ENCODE measurements at regions of chr9 and their contacts with region 1.

Region 1: DNA sequence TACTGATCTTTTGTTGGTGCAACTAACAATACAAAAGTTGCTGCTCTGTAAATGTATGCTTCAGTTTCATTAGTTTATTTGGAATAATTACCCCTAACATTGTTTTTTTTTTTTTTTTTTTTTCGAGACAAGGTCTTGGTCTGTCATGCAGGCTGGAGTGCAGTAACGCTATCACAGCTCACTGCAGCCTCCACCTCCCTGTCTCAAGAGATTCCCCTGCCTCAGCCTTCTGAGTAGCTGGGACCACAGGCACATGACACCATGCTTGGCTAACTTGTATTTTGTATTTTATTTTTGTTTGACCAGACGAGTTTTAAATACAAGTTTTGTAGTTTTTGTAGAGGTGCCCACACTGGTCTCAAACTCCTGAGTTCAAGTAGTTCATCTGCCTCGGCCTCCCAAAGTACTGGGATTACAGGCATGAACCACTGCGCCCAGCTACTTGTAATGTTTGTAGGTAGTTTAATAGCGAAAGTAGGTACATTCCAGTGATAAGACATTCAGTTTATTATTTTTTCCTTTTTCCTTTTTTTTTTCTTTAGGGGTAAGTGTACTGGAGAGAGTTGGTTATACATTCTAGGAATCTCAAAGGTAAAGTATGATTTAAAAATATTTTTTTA is 6.9 kb downstream of the GAPVD1 start:
- DNase-seq: no peak
- H3K4me3 ChIP-seq: no peak overlapping the region
- H3K27ac ChIP-seq: no peak overlapping the region
- H3K4me1 ChIP-seq: peaks cover 0 to 46% (median 25%) of the 10 kb centered on the region in 4 donors
- H3K27me3 ChIP-seq: no peaks in the 10 kb centered on the region
- CTCF ChIP-seq: no peak
- EP300 ChIP-seq: no peak
- POLR2A ChIP-seq: no peak

Region 2: DNA sequence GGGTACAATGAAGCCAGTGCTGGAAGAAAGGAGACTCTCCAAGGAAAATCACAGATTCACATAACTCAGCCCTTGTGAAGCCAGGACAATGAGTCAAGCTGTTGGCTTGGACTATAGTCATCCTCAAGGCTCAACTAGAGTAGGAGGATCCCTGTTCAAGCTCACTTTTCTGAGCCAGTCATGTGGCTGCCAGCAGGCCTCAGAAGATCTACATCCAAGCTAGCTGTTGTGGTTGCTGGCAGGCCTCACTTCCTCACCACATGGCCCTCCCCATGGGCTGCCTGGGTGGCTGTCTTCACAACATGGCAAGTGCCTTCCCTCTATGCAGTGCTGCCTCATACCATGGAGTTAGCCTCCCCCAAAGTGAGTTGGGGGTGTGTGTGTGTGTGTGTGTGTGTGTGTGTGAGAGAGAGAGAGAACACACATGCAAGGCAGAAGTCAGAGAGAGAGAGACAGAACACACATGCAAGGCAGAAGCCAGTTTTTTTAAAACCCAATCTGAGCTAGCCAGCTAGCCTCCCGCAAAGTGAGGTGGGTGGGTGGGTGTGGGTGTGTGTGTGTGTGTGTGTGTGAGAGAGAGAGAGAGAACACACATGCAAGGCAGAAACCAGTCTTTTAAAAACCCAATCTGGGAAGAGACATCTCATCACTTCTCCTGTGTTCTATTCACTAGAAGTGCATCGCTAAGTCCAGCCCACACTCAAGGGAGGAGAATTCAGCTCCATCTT is 142.3 kb before region 1 on chr9:
- intact Hi-C with region 1: no loop called
- DNase-seq: peak; percentile 96
- H3K4me3 ChIP-seq: no peak overlapping the region
- H3K27ac ChIP-seq: peak overlapping the region; percentile 27 to 65 (median 60)
- H3K4me1 ChIP-seq: peaks cover 0 to 22% (median 15%) of the 10 kb centered on the region in 4 donors
- H3K27me3 ChIP-seq: no peaks in the 10 kb centered on the region
- CTCF ChIP-seq: no peak
- EP300 ChIP-seq: peak in 1 of 4 donors; percentile 70
- POLR2A ChIP-seq: no peak

Region 3: DNA sequence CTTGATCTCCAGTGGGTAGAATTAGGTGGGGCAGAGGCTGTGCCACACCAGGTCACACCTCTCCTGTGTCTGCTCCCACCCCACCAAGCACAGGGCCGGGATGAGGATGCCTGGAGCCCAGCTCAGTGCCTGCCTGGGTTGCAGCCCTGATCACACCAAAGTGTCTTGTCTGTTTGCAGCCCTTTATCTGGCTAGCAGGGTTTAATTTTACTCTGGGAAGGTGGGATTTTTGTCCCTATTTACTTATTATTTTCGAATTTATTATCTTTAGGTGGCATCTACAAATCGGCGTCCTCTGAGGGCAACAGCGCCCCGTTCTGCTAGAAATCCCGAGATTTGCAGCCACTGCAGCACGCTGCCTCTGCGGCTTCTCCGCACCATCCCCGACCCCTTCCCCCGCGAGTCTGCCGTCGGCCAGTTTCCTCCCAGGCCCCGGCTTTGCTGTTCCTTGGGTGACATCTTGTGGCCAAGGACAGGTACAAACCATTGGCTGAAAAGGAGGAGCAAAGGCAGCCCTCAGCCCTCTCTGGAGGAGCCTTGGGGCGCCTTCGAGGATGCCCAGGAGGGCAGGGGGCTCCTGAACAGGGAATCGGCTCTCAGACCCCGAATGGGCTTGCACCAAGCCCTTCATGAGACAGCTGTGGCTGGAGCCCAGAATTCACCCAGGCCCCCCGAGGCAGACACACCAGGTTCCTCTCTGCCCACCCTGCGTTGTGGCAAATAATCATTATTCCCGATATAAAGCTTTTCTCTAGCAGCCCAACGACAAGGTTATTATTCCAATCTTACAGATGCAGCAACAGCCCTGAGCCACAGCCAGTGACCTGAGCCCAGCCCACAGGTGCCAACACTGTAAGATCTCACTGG is 106.2 kb after region 1 on chr9:
- intact Hi-C with region 1: loop called (anchors 5 kb)
- DNase-seq: peak; percentile 81
- H3K4me3 ChIP-seq: peak overlapping the region in 3 of 4 donors; percentile 18 to 34 (median 33)
- H3K27ac ChIP-seq: no peak overlapping the region
- H3K4me1 ChIP-seq: peaks cover 0 to 10% (median 7%) of the 10 kb centered on the region in 4 donors
- H3K27me3 ChIP-seq: peaks cover 0 to 6% (median 4%) of the 10 kb centered on the region in 3 donors
- CTCF ChIP-seq: peak; percentile 54 to 80 (median 68)
- EP300 ChIP-seq: no peak
- POLR2A ChIP-seq: no peak

Measured in sigmoid colon (tissue), 7 donors.